Activated B cell treated with CpG ODN at 0.5 μM for 24 hours (primary cell): ENCODE measurements at regions of chr4 and their contacts with region 1.

Region 1: DNA sequence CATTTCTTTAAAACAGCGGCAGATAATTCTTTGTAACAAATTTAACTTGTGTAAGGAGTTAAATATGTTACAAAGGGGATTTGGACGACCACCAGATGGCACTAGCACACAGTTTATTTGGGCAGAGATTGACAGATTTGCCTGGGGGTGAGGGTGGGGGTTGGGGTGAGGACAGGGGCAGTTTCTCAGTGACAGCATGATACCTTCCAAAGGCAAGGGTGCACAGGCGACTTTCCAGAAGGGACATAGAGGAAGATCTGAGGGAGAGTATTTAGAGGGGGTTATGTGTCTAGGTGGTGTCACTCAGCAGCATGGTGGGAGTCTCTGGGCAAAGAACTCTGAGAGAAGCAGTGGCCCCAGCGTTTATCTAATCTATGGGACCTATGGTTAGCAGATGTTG is 9.6 kb upstream of the TMA16 start:
- DNase-seq: no peak
- ATAC-seq: peak; percentile 80
- H3K4me3 Mint-ChIP-seq: no peak overlapping the region
- H3K27ac Mint-ChIP-seq: no peak overlapping the region
- H3K4me1 Mint-ChIP-seq: no peaks in the 10 kb centered on the region
- H3K27me3 Mint-ChIP-seq: no peaks in the 10 kb centered on the region
- CTCF ChIP-seq: no peak

Region 2: GRCh38 chr4:163048447-163048846 is 436.5 kb before region 1 on chr4:
- CTCF ChIA-PET with region 1: no interaction called
- POLR2A ChIA-PET with region 1: no interaction called
- intact Hi-C with region 1: loop called (anchors 5 kb)
- DNase-seq: no peak
- ATAC-seq: no peak
- H3K4me3 Mint-ChIP-seq: no peak overlapping the region
- H3K27ac Mint-ChIP-seq: no peak overlapping the region
- H3K4me1 Mint-ChIP-seq: no peaks in the 10 kb centered on the region
- H3K27me3 Mint-ChIP-seq: peaks cover 4% of the 10 kb centered on the region
- CTCF ChIP-seq: no peak

Region 3: GRCh38 chr4:163681208-163681821 is 196.4 kb after region 1 on chr4:
- CTCF ChIA-PET with region 1: interaction called, 6 read pairs
- POLR2A ChIA-PET with region 1: no interaction called
- intact Hi-C with region 1: loop called (anchors 1 kb)
- DNase-seq: no peak
- ATAC-seq: peak; percentile 81
- H3K4me3 Mint-ChIP-seq: no peak overlapping the region
- H3K27ac Mint-ChIP-seq: peak overlapping the region; percentile 25
- H3K4me1 Mint-ChIP-seq: peaks cover 19% of the 10 kb centered on the region
- H3K27me3 Mint-ChIP-seq: peaks cover 3% of the 10 kb centered on the region
- CTCF ChIP-seq: no peak

Region 4: GRCh38 chr4:163755013-163755412 is 270.1 kb after region 1 on chr4:
- CTCF ChIA-PET with region 1: interaction called, 8 read pairs
- POLR2A ChIA-PET with region 1: no interaction called
- intact Hi-C with region 1: loop called (anchors 1 kb)
- DNase-seq: no peak
- ATAC-seq: peak; percentile 56
- H3K4me3 Mint-ChIP-seq: peak overlapping the region; percentile 8
- H3K27ac Mint-ChIP-seq: no peak overlapping the region
- H3K4me1 Mint-ChIP-seq: peaks cover 3% of the 10 kb centered on the region
- H3K27me3 Mint-ChIP-seq: peaks cover 4% of the 10 kb centered on the region
- CTCF ChIP-seq: no peak

Region 5: GRCh38 chr4:164012396-164013027 is 527.6 kb after region 1 on chr4:
- CTCF ChIA-PET with region 1: no interaction called
- POLR2A ChIA-PET with region 1: no interaction called
- intact Hi-C with region 1: loop called (anchors 1 kb)
- DNase-seq: no peak
- ATAC-seq: no peak
- H3K4me3 Mint-ChIP-seq: no peak overlapping the region
- H3K27ac Mint-ChIP-seq: no peak overlapping the region
- H3K4me1 Mint-ChIP-seq: no peaks in the 10 kb centered on the region
- H3K27me3 Mint-ChIP-seq: no peaks in the 10 kb centered on the region
- CTCF ChIP-seq: no peak

Region 6: GRCh38 chr4:164731827-164732474 is 1247.0 kb after region 1 on chr4:
- CTCF ChIA-PET with region 1: interaction called, 9 read pairs
- POLR2A ChIA-PET with region 1: no interaction called
- intact Hi-C with region 1: loop called (anchors 1 kb)
- DNase-seq: peak; percentile 15
- ATAC-seq: peak; percentile 54
- H3K4me3 Mint-ChIP-seq: no peak overlapping the region
- H3K27ac Mint-ChIP-seq: no peak overlapping the region
- H3K4me1 Mint-ChIP-seq: no peaks in the 10 kb centered on the region
- H3K27me3 Mint-ChIP-seq: no peaks in the 10 kb centered on the region
- CTCF ChIP-seq: peak; percentile 89

Region 7: DNA sequence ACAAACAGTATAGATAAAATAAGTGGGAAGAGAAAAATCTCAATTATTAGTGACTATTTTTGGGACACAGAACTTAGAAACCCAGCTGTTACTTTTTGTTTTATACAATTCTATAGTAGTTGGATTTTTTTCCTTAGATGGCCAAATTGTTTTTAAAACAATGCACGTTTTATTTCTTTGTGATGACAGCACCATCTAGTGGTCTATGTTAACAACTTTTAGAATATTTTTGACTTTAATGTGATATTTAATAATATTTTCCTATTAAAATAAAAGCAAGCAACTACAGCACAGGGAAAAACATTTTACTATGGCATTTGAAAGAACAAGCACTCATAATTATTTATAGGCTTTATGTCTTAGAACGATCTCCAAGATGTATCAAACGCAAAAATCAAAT is 1263.5 kb after region 1 on chr4:
- CTCF ChIA-PET with region 1: no interaction called
- POLR2A ChIA-PET with region 1: no interaction called
- intact Hi-C with region 1: loop called (anchors 2 kb)
- DNase-seq: no peak
- ATAC-seq: no peak
- H3K4me3 Mint-ChIP-seq: no peak overlapping the region
- H3K27ac Mint-ChIP-seq: no peak overlapping the region
- H3K4me1 Mint-ChIP-seq: no peaks in the 10 kb centered on the region
- H3K27me3 Mint-ChIP-seq: no peaks in the 10 kb centered on the region
- CTCF ChIP-seq: no peak